Natural killer cell (primary cell): ENCODE measurements at regions of chr20 and their contacts with region 1.

Region 1: DNA sequence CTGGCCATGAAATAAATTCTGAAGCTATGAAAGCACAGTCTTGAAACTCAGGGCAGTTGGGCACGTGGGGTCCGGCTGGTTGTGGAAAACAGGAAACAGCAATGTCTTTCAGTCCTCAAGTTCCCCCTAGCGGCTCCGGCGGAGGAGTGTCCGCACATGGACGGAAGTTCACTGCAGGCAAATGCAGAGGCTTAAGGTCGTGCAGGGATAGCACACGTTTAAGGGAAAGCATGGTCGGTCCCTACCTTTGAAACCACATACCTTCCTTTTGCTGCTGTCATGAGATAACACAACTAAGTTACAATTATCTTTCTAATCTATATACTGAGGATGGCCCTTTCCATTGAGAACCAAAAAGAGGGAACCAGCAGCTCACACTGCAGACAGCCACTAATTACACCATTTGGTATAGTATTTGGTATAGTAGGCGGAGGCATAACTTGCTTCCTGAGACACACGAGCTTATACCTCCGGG is 52.6 kb upstream of the NFATC2 start:
- DNase-seq: peak; percentile 62 to 87
- ATAC-seq: peak; percentile 87 to 99 (median 99)
- H3K4me3 ChIP-seq: no peak overlapping the region
- H3K4me3 Mint-ChIP-seq: peak overlapping the region; percentile 65
- H3K27ac ChIP-seq: no peak overlapping the region
- H3K27ac Mint-ChIP-seq: peak overlapping the region; percentile 45 to 69
- H3K4me1 ChIP-seq: peaks cover 7% of the 10 kb centered on the region
- H3K4me1 Mint-ChIP-seq: peaks cover 9 to 21% of the 10 kb centered on the region in 2 donors
- H3K27me3 ChIP-seq: no peaks in the 10 kb centered on the region
- H3K27me3 Mint-ChIP-seq: no peaks in the 10 kb centered on the region
- CTCF ChIP-seq: peak; percentile 88

Region 2: GRCh38 chr20:51211191-51211590 is 383.9 kb before region 1 on chr20:
- intact Hi-C with region 1: loop called (anchors 10 kb)
- DNase-seq: no peak
- ATAC-seq: no peak
- H3K4me3 ChIP-seq: no peak overlapping the region
- H3K4me3 Mint-ChIP-seq: no peak overlapping the region
- H3K27ac ChIP-seq: no peak overlapping the region
- H3K27ac Mint-ChIP-seq: no peak overlapping the region
- H3K4me1 ChIP-seq: no peaks in the 10 kb centered on the region
- H3K4me1 Mint-ChIP-seq: no peaks in the 10 kb centered on the region
- H3K27me3 ChIP-seq: peaks cover 3% of the 10 kb centered on the region
- H3K27me3 Mint-ChIP-seq: peaks cover 27 to 78% of the 10 kb centered on the region in 2 donors
- CTCF ChIP-seq: no peak

Region 3: DNA sequence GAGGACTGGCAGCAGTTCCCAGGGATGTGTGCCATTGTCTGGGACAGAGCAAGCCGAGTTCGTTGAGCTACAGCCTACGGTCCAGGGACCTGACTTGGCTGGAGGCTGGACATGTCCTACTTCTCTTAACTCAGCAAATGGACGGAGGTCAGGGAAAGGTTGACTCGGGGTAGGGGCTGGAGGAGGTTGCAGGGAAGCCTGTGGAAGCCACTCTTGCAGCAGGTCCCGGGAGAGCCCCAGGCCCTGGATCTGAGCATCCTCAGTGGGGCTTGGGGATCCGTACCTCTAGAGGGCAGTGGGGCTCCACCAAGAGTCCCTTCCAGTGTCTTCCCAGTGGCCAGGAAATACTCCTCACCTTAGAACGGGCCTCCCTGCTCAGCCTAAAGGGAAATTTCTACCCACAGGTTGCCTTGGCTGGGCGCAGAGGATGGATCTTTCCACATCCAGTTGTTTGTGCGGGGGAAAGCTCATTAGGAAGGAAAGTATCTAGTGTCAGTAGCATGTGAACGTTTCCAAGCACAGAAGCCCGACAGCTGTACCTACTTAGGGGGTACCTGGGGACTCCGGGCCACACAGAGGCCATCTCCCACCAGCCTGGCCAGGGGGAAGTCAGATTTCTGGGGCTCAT is 222.8 kb before region 1 on chr20:
- intact Hi-C with region 1: loop called (anchors 1 kb)
- DNase-seq: peak; percentile 47 to 77
- ATAC-seq: peak; percentile 41 to 89 (median 89)
- H3K4me3 ChIP-seq: no peak overlapping the region
- H3K4me3 Mint-ChIP-seq: no peak overlapping the region
- H3K27ac ChIP-seq: no peak overlapping the region
- H3K27ac Mint-ChIP-seq: no peak overlapping the region
- H3K4me1 ChIP-seq: peaks cover 18% of the 10 kb centered on the region
- H3K4me1 Mint-ChIP-seq: peaks cover 17 to 18% of the 10 kb centered on the region in 2 donors
- H3K27me3 ChIP-seq: no peaks in the 10 kb centered on the region
- H3K27me3 Mint-ChIP-seq: no peaks in the 10 kb centered on the region
- CTCF ChIP-seq: peak; percentile 77

Region 4: GRCh38 chr20:51393571-51393970 is 201.5 kb before region 1 on chr20:
- intact Hi-C with region 1: no loop called
- DNase-seq: no peak
- ATAC-seq: no peak
- H3K4me3 ChIP-seq: no peak overlapping the region
- H3K4me3 Mint-ChIP-seq: no peak overlapping the region
- H3K27ac ChIP-seq: no peak overlapping the region
- H3K27ac Mint-ChIP-seq: peak overlapping the region; percentile 78 to 80
- H3K4me1 ChIP-seq: peaks cover 31% of the 10 kb centered on the region
- H3K4me1 Mint-ChIP-seq: peaks cover 50 to 65% of the 10 kb centered on the region in 2 donors
- H3K27me3 ChIP-seq: no peaks in the 10 kb centered on the region
- H3K27me3 Mint-ChIP-seq: no peaks in the 10 kb centered on the region
- CTCF ChIP-seq: no peak